ENCODE measurements at regions of chr19 and their contacts with region 1.

Region 1: GRCh38 chr19:18675779-18676178 is 7.7 kb upstream of the CRTC1 start:
- DNase-seq: no peak
- ATAC-seq: no peak
- H3K4me3 ChIP-seq: no peak overlapping the region
- H3K27ac ChIP-seq: no peak overlapping the region
- H3K4me1 ChIP-seq: peaks cover 0 to 23% (median 9%) of the 10 kb centered on the region in 12 donors
- H3K27me3 ChIP-seq: no peaks in the 10 kb centered on the region
- CTCF ChIP-seq: peak in 9 of 12 donors; percentile 18 to 49 (median 35)
- POLR2A ChIP-seq: no peak

Region 2: GRCh38 chr19:18440415-18440877 is 235.3 kb before region 1 on chr19:
- intact Hi-C with region 1: loop called in 1 of 10 experiments (anchors 10 kb)
- DNase-seq: no peak
- ATAC-seq: no peak
- H3K4me3 ChIP-seq: no peak overlapping the region
- H3K27ac ChIP-seq: no peak overlapping the region
- H3K4me1 ChIP-seq: peaks cover 0 to 37% (median 24%) of the 10 kb centered on the region in 12 donors
- H3K27me3 ChIP-seq: no peaks in the 10 kb centered on the region
- CTCF ChIP-seq: peak in 5 of 12 donors; percentile 17 to 33 (median 28)
- POLR2A ChIP-seq: no peak

Region 3: DNA sequence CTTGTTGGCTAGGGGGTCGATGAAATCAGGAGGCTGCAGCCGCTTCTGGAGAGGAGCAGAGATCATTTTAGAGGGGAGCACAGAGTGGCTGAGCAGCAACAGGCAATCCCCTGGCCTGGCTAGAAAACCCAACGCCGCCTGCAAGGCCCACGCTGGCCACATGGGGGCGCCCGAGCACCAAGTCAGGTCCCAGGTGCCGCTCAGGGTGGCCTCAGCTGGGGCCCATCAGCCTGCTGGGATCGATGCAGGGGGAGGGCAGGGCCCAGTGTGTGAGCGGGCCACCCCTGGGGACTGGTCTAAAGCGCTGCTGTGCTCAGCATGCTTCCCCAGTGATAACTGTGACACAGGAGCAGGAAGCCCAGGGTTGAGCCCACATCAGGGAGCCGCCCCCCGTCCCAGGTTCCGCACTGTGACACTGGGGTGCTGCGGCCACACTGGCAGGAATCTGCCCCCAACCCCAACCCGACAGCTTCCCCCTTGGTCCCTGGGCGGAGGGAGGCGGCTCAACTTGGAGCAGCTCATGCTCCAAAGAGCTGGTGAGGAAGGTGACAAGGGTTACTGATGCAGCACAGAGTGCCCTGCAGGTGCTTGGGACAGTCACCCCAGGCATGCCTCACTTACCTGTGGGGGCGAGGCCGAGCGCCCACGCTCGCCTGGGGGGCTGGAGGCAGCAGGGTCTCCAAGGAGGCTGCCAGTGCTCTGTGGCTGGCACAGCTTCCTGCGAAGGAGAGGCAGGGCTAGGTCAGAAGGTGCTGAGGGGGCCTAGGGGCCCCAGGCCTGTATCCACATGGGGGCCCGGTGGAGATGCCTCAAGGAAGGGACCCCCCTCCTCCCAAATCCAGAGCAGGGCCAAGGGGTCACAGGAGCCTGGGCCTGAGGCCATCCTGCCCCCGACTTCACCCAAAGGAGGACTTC is 224.6 kb before region 1 on chr19:
- intact Hi-C with region 1: loop called in 2 of 10 experiments (anchors 10 kb)
- DNase-seq: peak; percentile 85 to 94 (median 88)
- ATAC-seq: peak; percentile 78 to 88 (median 86)
- H3K4me3 ChIP-seq: no peak overlapping the region
- H3K27ac ChIP-seq: peak overlapping the region in 1 of 12 donors; percentile 41
- H3K4me1 ChIP-seq: peaks cover 0 to 21% (median 8%) of the 10 kb centered on the region in 12 donors
- H3K27me3 ChIP-seq: no peaks in the 10 kb centered on the region
- CTCF ChIP-seq: peak; percentile 96 to 99 (median 98)
- POLR2A ChIP-seq: no peak

Region 4: DNA sequence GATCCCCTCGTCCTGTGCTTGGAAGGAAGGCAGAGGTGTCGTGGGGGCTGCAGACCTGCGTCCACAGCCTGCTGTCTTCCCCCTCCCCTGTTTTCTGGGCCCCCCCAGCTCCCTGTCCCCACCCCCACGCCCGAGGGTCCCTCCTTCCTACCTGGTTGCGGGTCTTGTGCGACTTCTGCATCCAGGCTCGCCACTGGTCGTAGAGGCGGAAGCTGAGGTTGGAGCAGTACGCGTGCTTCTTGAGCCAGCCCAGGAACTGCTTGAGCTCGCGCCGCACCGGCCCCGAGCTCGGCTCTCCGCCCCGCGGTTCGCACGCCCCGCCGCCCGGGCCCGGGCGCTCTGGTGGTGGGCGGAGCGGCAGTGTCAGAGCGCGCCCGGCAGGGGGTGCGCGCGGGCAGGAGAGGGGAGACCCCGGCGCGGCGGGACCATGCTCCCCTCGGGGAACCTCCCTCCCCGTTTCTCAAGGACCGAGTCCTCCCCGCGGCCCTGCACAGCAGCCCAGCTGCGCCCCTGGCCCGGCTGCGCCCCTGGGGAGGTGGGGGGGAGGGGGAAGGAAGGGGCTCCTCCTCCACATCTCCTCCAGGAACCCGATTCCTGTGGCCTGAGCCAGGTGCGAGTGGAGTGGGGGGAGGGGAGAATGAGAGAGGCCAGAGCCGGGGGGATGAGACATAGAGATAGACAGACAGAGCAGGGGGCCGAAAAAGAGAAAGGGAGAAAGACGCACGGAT is 81.5 kb before region 1 on chr19:
- intact Hi-C with region 1: loop called in 8 of 10 experiments (anchors 5 to 10 kb)
- DNase-seq: peak; percentile 68 to 87 (median 73)
- ATAC-seq: peak; percentile 44 to 72 (median 65)
- H3K4me3 ChIP-seq: peak overlapping the region in 11 of 12 donors; percentile 12 to 54 (median 46)
- H3K27ac ChIP-seq: peak overlapping the region in 6 of 12 donors; percentile 13 to 63 (median 28)
- H3K4me1 ChIP-seq: peaks cover 4 to 39% (median 27%) of the 10 kb centered on the region in 12 donors
- H3K27me3 ChIP-seq: peaks cover 0 to 30% (median 15%) of the 10 kb centered on the region in 9 donors
- CTCF ChIP-seq: peak; percentile 49 to 94 (median 89)
- POLR2A ChIP-seq: peak in 1 of 2 donors; percentile 33

Measured in heart left ventricle (tissue), 16 donors.